ENCODE measurements at regions of chr2 and their contacts with region 1.

Region 1: DNA sequence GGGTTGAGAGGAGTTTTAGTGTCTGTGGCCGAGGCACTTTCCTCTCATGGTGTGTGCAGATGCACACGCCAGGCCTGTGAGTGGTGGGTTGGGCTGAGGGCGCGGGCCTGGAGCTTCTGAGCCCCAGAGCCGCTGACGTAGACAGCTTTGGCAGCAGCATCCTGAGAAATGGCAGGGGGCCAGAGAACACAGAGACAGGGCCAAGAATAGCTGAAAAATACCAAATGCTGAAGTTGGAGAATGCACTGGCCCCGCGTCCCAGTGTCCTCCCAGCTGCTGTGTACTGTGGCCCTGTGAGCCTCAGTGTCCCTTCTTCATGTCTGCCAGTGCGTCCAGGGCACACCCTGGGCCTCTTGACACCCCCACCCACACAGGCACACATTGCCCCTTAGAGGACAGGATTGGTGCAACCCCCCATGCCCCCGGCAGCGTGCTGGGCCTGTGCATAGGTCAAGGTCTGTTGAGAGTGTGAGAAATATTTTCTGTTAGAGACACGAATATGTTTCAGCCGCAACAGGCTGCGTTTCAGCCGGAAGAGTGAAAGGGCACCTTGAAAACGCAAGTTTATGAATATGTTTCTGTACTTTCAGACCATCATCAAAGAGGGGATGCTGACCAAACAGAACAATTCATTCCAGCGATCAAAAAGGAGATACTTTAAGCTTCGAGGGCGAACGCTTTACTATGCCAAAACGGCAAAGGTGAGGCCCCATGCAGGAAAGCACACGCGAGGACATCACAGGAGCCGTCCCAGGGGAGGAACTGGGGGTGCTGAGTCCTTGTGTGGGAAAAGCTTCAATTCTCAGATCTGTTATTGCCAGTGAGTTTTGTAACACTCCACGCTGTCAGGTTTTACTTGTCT is 33.6 kb downstream of the DGKD start:
- DNase-seq: peak in 6 of 10 donors; percentile 26 to 77 (median 58)
- ATAC-seq: peak; percentile 55 to 64
- H3K4me3 Mint-ChIP-seq: peak overlapping the region in 9 of 10 donors; percentile 2 to 88 (median 79)
- H3K27ac Mint-ChIP-seq: peak overlapping the region; percentile 89 to 96 (median 92)
- H3K4me1 Mint-ChIP-seq: peaks cover 44 to 82% (median 72%) of the 10 kb centered on the region in 4 donors
- H3K27me3 Mint-ChIP-seq: no peaks in the 10 kb centered on the region

Region 2: GRCh38 chr2:233242231-233242927 is 145.5 kb before region 1 on chr2:
- POLR2A ChIA-PET with region 1: no interaction called
- DNase-seq: no peak
- ATAC-seq: peak in 1 of 2 donors; percentile 34
- H3K4me3 Mint-ChIP-seq: peak overlapping the region in 1 of 10 donors; percentile 60
- H3K27ac Mint-ChIP-seq: peak overlapping the region; percentile 12 to 89 (median 70)
- H3K4me1 Mint-ChIP-seq: peaks cover 25 to 80% (median 75%) of the 10 kb centered on the region in 4 donors
- H3K27me3 Mint-ChIP-seq: no peaks in the 10 kb centered on the region

Region 3: DNA sequence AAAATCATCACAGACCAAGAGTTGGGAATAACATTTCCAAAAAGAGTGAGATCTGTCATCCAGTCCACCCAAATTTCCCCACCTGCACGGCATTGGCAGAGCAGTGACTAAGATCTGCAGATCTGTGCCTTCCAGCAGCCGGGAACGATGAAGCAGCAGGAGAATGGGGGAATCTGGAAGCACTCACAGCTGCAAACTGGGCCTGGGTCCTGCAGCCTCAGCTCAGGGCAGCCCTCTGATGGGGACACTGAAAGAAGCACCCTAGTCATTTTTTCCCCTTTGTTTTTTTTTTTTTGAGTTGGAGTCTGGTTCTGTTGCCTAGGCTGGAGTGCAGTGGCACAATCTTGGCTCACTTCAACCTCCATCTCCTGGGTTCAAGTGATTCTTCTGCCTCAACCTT is 84.6 kb before region 1 on chr2:
- POLR2A ChIA-PET with region 1: no interaction called
- DNase-seq: no peak
- ATAC-seq: no peak
- H3K4me3 Mint-ChIP-seq: no peak overlapping the region
- H3K27ac Mint-ChIP-seq: no peak overlapping the region
- H3K4me1 Mint-ChIP-seq: peaks cover 4 to 12% (median 9%) of the 10 kb centered on the region in 4 donors
- H3K27me3 Mint-ChIP-seq: no peaks in the 10 kb centered on the region

Region 4: DNA sequence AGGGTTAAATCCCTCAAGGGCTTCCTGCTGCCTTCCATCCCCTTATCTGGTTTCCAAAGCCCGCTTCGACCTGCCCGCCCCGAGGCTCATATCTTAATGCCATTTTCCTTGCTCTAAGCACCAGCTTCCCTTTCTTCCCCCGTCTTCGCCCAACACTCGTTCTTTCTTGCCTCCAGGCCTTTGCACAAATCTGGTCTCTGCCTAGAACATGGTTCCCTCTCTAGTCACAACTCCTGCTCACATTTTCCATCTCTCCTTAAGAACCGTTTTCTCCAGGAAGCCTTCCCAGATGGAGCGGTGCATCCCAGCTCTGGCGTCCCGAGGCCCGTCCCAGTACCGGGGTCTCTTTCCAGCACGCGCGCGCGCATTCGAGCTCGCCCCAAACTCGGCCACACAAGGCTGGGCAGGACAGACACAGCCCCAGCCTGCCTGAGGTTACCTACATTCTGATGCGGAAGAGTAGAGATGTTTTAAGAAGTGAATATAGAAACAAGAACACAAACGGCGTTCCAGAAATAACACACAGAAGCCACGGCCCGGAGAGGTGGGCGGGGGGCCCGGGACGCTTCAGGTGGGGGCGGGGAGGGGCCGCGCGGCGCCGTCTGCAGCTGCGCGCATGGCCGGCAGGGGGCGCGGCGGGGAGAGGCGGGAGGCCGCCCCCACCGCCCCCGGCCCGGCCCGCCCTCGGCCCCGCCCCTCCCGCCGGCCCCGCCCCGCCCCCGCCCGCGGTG is 34.0 kb before region 1 on chr2 and contains the start of gene DGKD:
- POLR2A ChIA-PET with region 1: interaction called, 13 read pairs
- DNase-seq: peak; percentile 46 to 92 (median 72)
- ATAC-seq: peak; percentile 70 to 81
- H3K4me3 Mint-ChIP-seq: peak within 1 kb of the TSS; percentile 87 to 97 (median 95)
- H3K27ac Mint-ChIP-seq: peak within 1 kb of the TSS; percentile 93 to 98 (median 95)
- H3K4me1 Mint-ChIP-seq: peaks cover 35 to 83% (median 80%) of the 10 kb centered on the region in 4 donors
- H3K27me3 Mint-ChIP-seq: no peaks in the 10 kb centered on the region
- polyA plus RNA-seq, gene DGKD: 29.3 to 44.5 (median 31.6) TPM

Region 5: GRCh38 chr2:233404222-233404621 is 16.3 kb after region 1 on chr2:
- POLR2A ChIA-PET with region 1: interaction called, 21 read pairs
- DNase-seq: peak; percentile 44 to 88 (median 70)
- ATAC-seq: peak; percentile 54 to 64
- H3K4me3 Mint-ChIP-seq: peak overlapping the region in 7 of 10 donors; percentile 30 to 76 (median 47)
- H3K27ac Mint-ChIP-seq: peak overlapping the region; percentile 53 to 94 (median 83)
- H3K4me1 Mint-ChIP-seq: peaks cover 46 to 89% (median 84%) of the 10 kb centered on the region in 4 donors
- H3K27me3 Mint-ChIP-seq: no peaks in the 10 kb centered on the region

Region 6: GRCh38 chr2:233449081-233449901 is 61.4 kb after region 1 on chr2:
- POLR2A ChIA-PET with region 1: no interaction called
- DNase-seq: peak in 1 of 10 donors; percentile 47
- ATAC-seq: no peak
- H3K4me3 Mint-ChIP-seq: no peak overlapping the region
- H3K27ac Mint-ChIP-seq: peak overlapping the region in 4 of 10 donors; percentile 7 to 78 (median 36)
- H3K4me1 Mint-ChIP-seq: peaks cover 2 to 17% (median 14%) of the 10 kb centered on the region in 4 donors
- H3K27me3 Mint-ChIP-seq: no peaks in the 10 kb centered on the region

Region 7: DNA sequence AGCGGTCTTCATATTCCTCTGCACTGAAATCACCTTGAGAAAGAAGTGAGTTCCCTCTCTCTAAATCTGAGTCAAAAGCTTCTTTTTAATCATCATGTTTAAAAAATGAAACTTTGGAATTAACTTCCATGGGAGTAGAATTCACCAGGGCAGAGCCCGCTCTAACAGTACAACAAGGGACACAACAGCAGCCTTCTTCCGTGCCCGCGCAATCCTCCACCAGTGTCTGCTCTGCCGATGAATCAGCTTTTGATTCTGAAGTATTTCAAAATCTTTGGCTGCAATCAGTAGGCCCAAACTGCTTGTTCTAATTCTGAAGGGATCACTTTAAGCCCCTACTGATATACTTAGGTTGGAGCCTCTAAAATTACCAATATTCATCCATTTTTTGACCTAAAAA is 101.8 kb after region 1 on chr2:
- POLR2A ChIA-PET with region 1: no interaction called
- DNase-seq: no peak
- ATAC-seq: no peak
- H3K4me3 Mint-ChIP-seq: no peak overlapping the region
- H3K27ac Mint-ChIP-seq: peak overlapping the region in 1 of 10 donors; percentile 26
- H3K4me1 Mint-ChIP-seq: peaks cover 0 to 3% (median 0%) of the 10 kb centered on the region in 4 donors
- H3K27me3 Mint-ChIP-seq: no peaks in the 10 kb centered on the region